ENCODE measurements at regions of chr4 and their contacts with region 1.

Region 1: DNA sequence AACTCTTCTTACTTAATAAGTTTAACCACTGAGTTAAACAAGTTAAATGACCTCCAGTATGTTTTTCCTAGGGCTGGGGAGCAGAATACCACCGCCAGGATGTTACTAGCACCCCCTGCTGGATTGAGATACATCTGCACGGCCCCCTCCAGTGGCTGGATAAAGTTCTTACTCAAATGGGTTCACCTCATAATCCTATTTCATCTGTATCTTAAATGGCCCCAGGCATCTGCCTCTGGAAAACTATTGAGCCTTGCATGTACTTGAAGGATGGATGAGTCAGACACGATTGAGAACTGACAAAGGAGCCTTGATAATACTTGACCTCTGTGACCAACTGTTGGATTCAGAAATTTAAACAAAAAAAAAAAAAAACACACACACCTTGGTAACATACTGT is 61.5 kb upstream of the MMAA start:
- DNase-seq: peak; percentile 70
- H3K4me3 Mint-ChIP-seq: no peak overlapping the region
- H3K27ac Mint-ChIP-seq: no peak overlapping the region
- H3K4me1 Mint-ChIP-seq: peaks cover under 1% of the 10 kb centered on the region
- H3K27me3 Mint-ChIP-seq: peaks cover 8% of the 10 kb centered on the region

Region 2: DNA sequence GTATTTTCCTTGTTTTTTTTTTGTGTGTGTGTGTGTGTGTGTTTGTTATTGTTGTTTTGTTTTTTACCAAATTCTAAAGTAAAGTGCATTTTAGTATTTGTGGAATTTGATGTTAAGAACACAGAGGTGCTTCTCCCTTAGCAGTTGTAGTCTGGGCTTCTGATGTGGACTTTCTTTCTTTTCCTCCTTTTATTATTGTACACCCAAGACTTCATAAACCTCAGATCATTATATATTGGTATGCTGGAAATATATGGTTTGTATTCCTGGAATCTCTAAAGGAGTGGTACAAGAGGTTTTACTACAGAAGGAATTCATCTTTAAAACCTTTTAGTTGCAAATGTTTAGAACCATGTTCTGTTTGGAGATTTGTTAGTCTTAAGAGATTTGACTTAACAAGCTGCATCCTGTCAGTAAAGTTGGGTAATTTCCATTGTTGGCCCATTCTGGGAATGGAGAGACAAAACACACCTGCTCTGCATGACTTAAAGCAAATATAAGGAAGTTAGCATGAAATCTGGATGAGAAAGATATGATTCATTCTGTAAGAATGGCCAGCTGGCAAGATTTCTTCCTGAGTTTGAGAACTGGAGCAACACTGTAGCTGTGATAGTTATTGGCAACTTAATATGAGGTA is 12.1 kb before region 1 on chr4:
- CTCF ChIA-PET with region 1: interaction called, 11 read pairs
- POLR2A ChIA-PET with region 1: no interaction called
- intact Hi-C with region 1: no loop called
- DNase-seq: no peak
- H3K4me3 Mint-ChIP-seq: no peak overlapping the region
- H3K27ac Mint-ChIP-seq: no peak overlapping the region
- H3K4me1 Mint-ChIP-seq: no peaks in the 10 kb centered on the region
- H3K27me3 Mint-ChIP-seq: peaks cover 3% of the 10 kb centered on the region

Measured in activated CD4-positive, alpha-beta memory T cell treated with anti-CD3 and anti-CD28 coated beads for 36 hours (primary cell).